Activated T-helper 1 cell treated with anti-CD3 and anti-CD28 coated beads, Interleukin-12 subunit alpha, Interleukin-12 subunit beta, Interleukin-2, Interleukin-4 antibody, amounts not matched to agents 30 ng/mL and 10 ng/mL and 1 ng/mL, durations not matched to agents 14 hours and 24 hours and 36 hours (primary cell): ENCODE measurements at regions of chr17 and their contacts with region 1.

Region 1: DNA sequence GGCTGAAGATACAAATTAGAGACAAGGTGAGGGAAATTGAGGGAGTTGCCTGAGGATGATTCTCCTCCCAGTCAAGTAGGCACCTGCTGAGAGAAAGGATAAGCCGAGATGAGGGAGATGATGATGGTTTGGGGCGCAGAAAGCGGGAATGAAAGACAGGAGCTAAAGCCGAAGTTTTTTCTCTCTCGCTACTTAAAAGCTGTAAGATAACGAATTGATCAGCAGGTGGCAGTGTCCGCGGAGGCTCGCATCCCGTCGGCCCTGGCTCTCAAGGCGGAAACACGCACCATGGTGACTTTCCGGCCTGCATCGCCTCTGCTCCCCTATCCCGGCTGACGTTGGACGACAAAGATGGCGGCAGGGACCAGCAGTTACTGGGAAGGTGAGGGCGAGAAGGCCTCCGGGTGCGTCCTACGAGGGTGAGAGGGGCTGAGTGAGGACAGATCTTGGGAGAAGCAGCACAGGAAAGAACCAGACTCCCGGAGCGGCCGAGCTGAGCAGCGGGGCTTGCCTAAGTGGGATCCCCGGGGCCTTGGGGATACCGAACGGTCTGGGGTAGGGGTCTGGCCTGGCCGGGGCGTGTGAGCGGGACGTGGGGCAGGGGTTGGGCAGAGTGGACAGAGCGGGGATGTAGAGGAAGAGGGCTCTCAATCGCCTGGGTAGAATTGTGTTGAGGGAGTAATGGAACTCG is at the start of gene GOSR1:
- DNase-seq: peak; percentile 87
- H3K4me3 Mint-ChIP-seq: peak within 1 kb of the TSS; percentile 98
- H3K27ac Mint-ChIP-seq: peak within 1 kb of the TSS; percentile 98
- H3K4me1 Mint-ChIP-seq: peaks cover 34% of the 10 kb centered on the region
- H3K27me3 Mint-ChIP-seq: no peaks in the 10 kb centered on the region
- total RNA-seq, gene GOSR1: 61.5 and 66.6 TPM in 2 replicates

Region 2: GRCh38 chr17:30124273-30124796 is 352.9 kb before region 1 on chr17:
- intact Hi-C with region 1: loop called (anchors 2 kb)
- DNase-seq: no peak
- H3K4me3 Mint-ChIP-seq: no peak overlapping the region
- H3K27ac Mint-ChIP-seq: no peak overlapping the region
- H3K4me1 Mint-ChIP-seq: peaks cover 33% of the 10 kb centered on the region
- H3K27me3 Mint-ChIP-seq: no peaks in the 10 kb centered on the region

Region 3: DNA sequence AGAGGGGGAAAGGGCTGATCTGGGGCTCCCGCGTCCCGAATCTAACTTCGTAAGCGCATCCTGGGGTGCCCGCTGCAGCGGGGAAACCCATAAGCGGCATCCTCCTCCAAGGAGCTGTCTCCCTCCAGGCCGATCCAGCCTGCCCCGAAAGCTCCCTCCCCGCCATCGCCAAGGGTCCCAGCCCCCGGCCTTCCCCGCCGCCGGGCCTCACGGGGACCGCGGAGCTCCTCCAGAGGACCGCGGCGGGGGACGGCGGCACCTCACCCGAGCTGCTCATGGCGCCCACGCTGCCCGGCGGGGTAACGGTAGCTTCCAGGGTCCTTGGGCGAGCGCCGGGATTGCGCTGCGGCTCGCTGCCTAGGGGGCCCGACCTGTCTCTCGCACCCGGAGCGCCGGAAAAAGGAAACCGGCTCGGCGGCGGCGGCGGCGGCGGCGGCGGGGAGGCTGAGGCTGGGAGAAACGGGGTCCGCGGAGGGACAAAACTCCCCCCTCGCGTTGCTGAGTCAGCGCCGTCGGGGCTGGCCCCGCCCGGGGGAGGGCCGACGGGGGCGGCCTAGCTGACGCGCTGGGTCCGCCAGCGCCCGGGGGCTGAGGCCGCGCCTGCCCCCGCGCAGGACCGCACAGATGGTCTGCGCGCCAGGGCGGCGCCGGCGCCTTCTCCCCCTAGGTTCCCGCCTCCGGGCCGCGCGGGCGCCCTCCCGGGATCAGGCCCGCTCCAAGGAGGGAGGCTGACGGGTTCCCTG is 185.5 kb before region 1 on chr17 and contains the start of gene BLMH:
- intact Hi-C with region 1: loop called (anchors 2 kb)
- DNase-seq: peak; percentile 80
- H3K4me3 Mint-ChIP-seq: peak within 1 kb of the TSS; percentile 97
- H3K27ac Mint-ChIP-seq: peak within 1 kb of the TSS; percentile 90
- H3K4me1 Mint-ChIP-seq: peaks cover 13% of the 10 kb centered on the region
- H3K27me3 Mint-ChIP-seq: no peaks in the 10 kb centered on the region
- total RNA-seq, gene BLMH: 64.8 and 64.9 TPM in 2 replicates

Region 4: DNA sequence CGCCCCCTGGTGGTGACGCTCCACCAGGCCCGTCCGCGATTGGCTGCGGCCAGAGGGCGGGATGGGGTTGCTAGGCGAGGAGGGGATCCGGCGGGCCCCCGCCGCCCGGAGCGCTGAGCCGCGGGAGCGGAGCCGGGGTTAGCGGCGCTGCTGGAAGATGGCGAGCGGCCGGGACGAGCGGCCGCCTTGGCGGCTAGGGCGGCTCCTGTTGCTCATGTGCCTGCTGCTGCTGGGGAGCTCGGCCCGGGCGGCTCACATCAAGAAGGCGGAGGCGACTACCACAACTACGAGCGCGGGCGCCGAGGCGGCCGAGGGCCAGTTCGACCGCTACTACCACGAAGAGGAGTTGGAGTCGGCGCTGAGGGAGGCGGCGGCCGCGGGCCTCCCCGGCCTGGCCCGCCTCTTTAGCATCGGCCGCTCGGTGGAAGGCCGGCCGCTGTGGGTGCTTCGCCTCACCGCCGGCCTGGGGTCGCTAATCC is 98.4 kb before region 1 on chr17 and contains the start of gene CPD:
- intact Hi-C with region 1: loop called (anchors 1 kb)
- DNase-seq: peak; percentile 97
- H3K4me3 Mint-ChIP-seq: peak within 1 kb of the TSS; percentile 92
- H3K27ac Mint-ChIP-seq: peak within 1 kb of the TSS; percentile 97
- H3K4me1 Mint-ChIP-seq: peaks cover 67% of the 10 kb centered on the region
- H3K27me3 Mint-ChIP-seq: no peaks in the 10 kb centered on the region
- total RNA-seq, gene CPD: 29.7 and 35.3 TPM in 2 replicates

Region 5: DNA sequence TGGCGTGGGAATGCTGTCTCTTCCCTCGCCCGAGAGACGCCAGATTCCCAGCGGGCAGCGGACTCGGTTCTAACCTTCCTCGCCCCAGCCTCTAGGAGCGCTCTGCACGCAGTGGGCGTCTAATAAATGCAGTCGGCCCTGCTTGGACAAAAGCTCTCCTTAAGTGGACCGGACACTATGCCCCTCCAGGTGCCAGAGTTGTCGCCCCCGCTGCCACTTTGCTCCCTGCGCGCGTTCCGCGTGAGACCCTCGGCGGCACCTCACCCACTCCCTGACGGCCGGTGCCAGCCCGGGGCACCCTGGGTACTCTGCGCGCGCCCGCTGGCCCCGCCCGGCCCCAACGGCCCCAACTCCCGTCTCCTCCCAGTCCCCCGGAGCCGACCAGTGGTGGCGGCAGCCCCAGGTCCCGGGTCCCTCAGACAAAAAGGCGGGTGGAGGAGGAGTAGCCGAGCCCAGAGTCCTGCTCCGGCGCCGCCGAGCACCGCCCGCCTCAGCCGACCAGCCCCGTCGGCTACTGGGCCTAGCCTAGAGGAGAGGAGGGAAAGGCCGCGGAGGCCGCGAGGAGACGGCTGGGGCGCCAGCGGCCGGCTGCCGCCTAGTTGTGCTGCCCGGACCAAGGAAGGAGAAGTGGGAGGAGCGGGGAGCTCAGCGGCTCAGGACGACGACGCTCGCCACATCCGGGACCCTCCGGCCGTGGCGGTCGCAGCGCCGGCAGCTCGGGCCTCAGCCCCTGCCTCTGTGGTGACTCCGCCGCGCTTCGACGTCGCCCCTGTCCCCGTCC is 123.0 kb after region 1 on chr17:
- intact Hi-C with region 1: loop called (anchors 5 kb)
- DNase-seq: peak; percentile 57
- H3K4me3 Mint-ChIP-seq: peak overlapping the region; percentile 81
- H3K27ac Mint-ChIP-seq: peak overlapping the region; percentile 55
- H3K4me1 Mint-ChIP-seq: peaks cover 19% of the 10 kb centered on the region
- H3K27me3 Mint-ChIP-seq: peaks cover 24% of the 10 kb centered on the region

Region 6: GRCh38 chr17:30716461-30717300 is 239.5 kb after region 1 on chr17:
- intact Hi-C with region 1: loop called (anchors 1 kb)
- DNase-seq: no peak
- H3K4me3 Mint-ChIP-seq: no peak overlapping the region
- H3K27ac Mint-ChIP-seq: peak overlapping the region; percentile 40
- H3K4me1 Mint-ChIP-seq: peaks cover 13% of the 10 kb centered on the region
- H3K27me3 Mint-ChIP-seq: peaks cover 6% of the 10 kb centered on the region